Common myeloid progenitor, CD34-positive (primary cell): ENCODE measurements at regions of chr1 and their contacts with region 1.

Region 1: DNA sequence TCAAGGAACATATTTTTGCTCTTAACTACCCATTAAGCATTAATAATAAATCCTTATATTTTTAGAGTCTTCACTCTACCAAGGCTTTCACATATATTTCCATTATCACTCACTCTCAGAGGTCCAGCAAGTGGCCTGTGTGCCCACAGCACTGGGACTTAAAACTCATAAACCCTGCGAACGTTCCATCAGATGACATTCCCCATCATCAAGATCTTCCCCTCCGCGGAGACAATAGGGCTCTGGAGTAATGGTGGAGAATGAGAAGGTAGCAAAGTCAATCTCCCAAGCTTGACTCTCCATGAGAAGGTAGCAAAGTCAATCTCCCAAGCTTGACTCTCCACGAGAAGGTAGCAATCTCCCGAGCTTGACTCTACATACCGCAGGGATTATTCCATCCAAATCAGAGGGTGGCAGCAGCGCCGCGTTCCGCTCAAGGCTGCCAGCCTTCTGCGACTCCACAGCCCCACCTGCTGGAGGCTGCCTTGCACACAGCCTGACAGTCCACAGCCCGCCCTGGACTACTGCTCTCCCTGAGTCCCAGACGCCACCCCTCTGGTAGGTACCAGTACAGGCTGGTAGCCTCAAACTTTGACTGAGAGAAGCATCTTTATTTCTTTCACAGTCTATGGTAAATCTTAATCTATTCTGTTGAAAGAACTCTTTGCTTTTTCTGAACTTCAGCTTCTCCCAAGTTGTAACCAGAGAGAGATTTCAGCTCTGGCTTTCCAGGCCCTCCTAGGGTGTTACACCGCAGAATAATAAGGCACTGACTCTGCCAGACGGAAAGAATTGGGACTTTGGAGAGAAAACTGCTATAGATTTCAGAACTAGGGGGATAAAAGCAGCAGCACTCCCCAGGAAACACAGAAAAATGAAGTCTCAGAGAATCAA is 26.4 kb upstream of the CTTNBP2NL start:
- DNase-seq: peak; percentile 83 to 89 (median 87)
- H3K4me3 ChIP-seq: no peak overlapping the region
- H3K27ac ChIP-seq: no peak overlapping the region
- H3K4me1 ChIP-seq: no peaks in the 10 kb centered on the region
- H3K27me3 ChIP-seq: peaks cover 3 to 13% (median 9%) of the 10 kb centered on the region in 5 experiments

Region 2: GRCh38 chr1:112358798-112359408 is 10.7 kb before region 1 on chr1:
- CTCF ChIA-PET with region 1: interaction called, 13 read pairs
- POLR2A ChIA-PET with region 1: no interaction called
- DNase-seq: peak; percentile 27 to 54 (median 44)
- H3K4me3 ChIP-seq: no peak overlapping the region
- H3K27ac ChIP-seq: no peak overlapping the region
- H3K4me1 ChIP-seq: peaks cover 0 to 6% (median 2%) of the 10 kb centered on the region in 4 experiments
- H3K27me3 ChIP-seq: peaks cover 0 to 7% (median 2%) of the 10 kb centered on the region in 5 experiments

Region 3: DNA sequence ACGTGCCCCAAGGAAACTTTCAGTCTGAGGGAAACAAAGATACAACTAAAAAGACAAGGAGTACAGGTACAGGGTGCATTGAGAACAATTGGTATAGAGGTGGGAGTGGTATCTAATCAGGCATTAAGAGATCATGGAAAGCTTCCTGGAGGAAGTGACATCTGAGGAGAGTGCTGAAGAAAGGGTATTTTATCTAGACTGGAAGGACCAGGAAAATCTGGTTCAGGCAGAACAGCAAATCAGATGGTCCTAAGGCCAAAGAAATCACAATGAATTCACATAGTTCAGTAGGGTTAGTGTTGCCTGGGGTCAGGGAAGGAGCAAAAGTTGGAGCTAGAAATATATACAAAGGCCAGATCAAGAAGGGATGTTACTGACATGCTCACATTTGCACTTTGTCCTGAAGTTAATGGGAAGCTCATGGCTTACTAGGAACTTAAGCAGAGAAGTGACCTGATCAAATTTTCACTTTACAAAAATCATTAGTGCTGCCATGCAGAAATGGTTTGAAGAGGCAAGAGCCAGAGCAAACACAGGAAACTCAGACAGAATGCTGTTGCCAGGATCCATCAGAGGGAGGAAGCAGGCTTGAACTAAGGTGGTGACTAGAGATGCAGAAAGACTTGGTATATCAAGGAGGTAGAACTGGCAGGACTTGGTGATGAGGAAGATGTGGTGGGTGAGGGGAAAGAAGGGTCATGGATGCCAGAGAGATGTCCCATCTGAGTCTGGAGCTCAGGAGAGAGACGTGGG is 11.9 kb after region 1 on chr1:
- CTCF ChIA-PET with region 1: interaction called, 14 read pairs
- POLR2A ChIA-PET with region 1: interaction called, 3 read pairs
- DNase-seq: no peak
- H3K4me3 ChIP-seq: no peak overlapping the region
- H3K27ac ChIP-seq: no peak overlapping the region
- H3K4me1 ChIP-seq: no peaks in the 10 kb centered on the region
- H3K27me3 ChIP-seq: peaks cover 0 to 1% (median 0%) of the 10 kb centered on the region in 5 experiments

Region 4: GRCh38 chr1:112395821-112396652 is 26.4 kb after region 1 on chr1 and contains the start of gene CTTNBP2NL:
- CTCF ChIA-PET with region 1: no interaction called
- POLR2A ChIA-PET with region 1: no interaction called
- DNase-seq: peak; percentile 65 to 72 (median 71)
- H3K4me3 ChIP-seq: peak within 1 kb of the TSS; percentile 85 to 98 (median 93)
- H3K27ac ChIP-seq: peak within 1 kb of the TSS in 1 of 2 experiments; percentile 64
- H3K4me1 ChIP-seq: peaks cover 5 to 36% (median 27%) of the 10 kb centered on the region in 4 experiments
- H3K27me3 ChIP-seq: no peaks in the 10 kb centered on the region